IMR-90 (cell line): ENCODE measurements at regions of chr14 and their contacts with region 1.

Region 1: DNA sequence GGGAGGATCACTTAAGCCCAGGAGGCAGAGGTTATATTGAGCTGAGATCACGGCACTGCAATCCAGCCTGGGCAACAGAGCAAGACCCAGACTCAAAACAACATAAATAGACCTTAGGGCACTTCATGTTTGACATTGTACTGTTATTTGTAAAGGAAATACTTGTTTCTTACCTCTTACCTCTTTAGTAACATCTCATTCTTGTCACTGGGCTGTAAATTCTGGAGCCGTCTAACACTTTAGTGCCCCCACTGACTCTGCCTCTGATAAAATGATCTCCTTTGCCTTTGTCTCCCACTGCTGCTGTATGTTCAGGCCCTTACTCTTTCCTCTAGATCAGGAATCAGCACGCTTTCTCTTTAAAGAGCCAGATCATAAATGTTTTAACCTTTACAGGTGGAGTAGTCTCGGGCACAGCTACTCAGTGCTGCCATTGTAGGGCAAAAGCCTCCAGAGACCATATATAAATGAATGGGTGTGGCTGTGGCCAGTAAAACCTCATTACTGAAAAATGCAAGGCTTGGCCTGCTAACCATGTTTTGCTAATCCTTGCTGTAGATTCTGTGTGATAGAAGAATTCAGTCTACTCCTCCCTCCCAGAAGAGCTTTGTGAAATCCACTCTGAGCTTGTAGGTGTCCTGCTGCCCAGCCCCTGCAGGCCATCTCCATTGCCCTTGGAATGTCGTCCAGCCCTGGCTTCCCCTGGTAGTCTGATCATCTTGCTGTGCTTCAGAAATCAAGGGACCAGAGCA is 58.2 kb downstream of the HSP90AA1 start:
- DNase-seq: peak; percentile 77
- ATAC-seq: peak; percentile 78
- H3K4me3 ChIP-seq: no peak overlapping the region
- H3K27ac ChIP-seq: peak overlapping the region; percentile 80
- H3K4me1 ChIP-seq: peaks cover 13% of the 10 kb centered on the region
- H3K27me3 ChIP-seq: no peaks in the 10 kb centered on the region
- CTCF ChIP-seq: no peak
- POLR2A ChIP-seq: no peak
- RAD21 ChIP-seq: no peak

Region 2: GRCh38 chr14:101520621-101521472 is 507.8 kb before region 1 on chr14:
- CTCF ChIA-PET with region 1: no interaction called
- POLR2A ChIA-PET with region 1: no interaction called
- dilution Hi-C with region 1: no loop called
- in situ Hi-C with region 1: no loop called
- intact Hi-C with region 1: no loop called
- DNase-seq: no peak
- ATAC-seq: no peak
- H3K4me3 ChIP-seq: no peak overlapping the region
- H3K27ac ChIP-seq: no peak overlapping the region
- H3K4me1 ChIP-seq: no peaks in the 10 kb centered on the region
- H3K27me3 ChIP-seq: no peaks in the 10 kb centered on the region; the same call in 1 of the 2 replicates
- CTCF ChIP-seq: no peak
- POLR2A ChIP-seq: no peak
- RAD21 ChIP-seq: no peak

Region 3: DNA sequence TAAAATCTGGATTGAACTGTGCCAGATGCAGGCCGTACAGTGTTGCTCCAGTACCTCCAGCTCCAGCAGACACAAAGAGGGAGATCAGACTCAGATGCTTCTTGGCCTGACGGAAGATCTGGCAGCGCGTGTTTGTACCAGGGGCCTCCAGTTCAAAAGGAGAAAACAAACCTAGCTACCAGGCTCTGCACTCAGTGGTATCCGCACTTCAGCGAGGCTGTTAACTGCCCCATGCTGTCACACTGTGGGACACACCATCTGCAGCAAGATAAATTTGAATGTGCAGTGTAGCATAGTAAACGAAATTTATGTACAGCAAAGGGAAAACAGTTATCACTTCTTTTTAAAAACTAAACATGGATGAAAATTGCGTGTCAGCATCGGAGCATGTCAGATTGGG is 59.1 kb before region 1 on chr14:
- CTCF ChIA-PET with region 1: no interaction called
- POLR2A ChIA-PET with region 1: no interaction called
- dilution Hi-C with region 1: no loop called
- in situ Hi-C with region 1: no loop called
- intact Hi-C with region 1: no loop called
- DNase-seq: no peak
- ATAC-seq: no peak
- H3K4me3 ChIP-seq: no peak overlapping the region
- H3K27ac ChIP-seq: no peak overlapping the region
- H3K4me1 ChIP-seq: peaks cover 2% of the 10 kb centered on the region
- H3K27me3 ChIP-seq: no peaks in the 10 kb centered on the region
- CTCF ChIP-seq: no peak
- POLR2A ChIP-seq: no peak
- RAD21 ChIP-seq: no peak

Region 4: GRCh38 chr14:101980251-101981099 is 48.1 kb before region 1 on chr14:
- CTCF ChIA-PET with region 1: no interaction called
- POLR2A ChIA-PET with region 1: no interaction called
- dilution Hi-C with region 1: no loop called
- in situ Hi-C with region 1: no loop called
- intact Hi-C with region 1: loop called (anchors 5 kb)
- DNase-seq: peak; percentile 99
- ATAC-seq: peak; percentile 91
- H3K4me3 ChIP-seq: no peak overlapping the region
- H3K27ac ChIP-seq: peak overlapping the region; percentile 82
- H3K4me1 ChIP-seq: peaks cover 8% of the 10 kb centered on the region
- H3K27me3 ChIP-seq: no peaks in the 10 kb centered on the region
- CTCF ChIP-seq: no peak
- POLR2A ChIP-seq: no peak
- RAD21 ChIP-seq: 0 out of 2 replicates have a peak, but pooled peaks have one; percentile 6

Region 5: DNA sequence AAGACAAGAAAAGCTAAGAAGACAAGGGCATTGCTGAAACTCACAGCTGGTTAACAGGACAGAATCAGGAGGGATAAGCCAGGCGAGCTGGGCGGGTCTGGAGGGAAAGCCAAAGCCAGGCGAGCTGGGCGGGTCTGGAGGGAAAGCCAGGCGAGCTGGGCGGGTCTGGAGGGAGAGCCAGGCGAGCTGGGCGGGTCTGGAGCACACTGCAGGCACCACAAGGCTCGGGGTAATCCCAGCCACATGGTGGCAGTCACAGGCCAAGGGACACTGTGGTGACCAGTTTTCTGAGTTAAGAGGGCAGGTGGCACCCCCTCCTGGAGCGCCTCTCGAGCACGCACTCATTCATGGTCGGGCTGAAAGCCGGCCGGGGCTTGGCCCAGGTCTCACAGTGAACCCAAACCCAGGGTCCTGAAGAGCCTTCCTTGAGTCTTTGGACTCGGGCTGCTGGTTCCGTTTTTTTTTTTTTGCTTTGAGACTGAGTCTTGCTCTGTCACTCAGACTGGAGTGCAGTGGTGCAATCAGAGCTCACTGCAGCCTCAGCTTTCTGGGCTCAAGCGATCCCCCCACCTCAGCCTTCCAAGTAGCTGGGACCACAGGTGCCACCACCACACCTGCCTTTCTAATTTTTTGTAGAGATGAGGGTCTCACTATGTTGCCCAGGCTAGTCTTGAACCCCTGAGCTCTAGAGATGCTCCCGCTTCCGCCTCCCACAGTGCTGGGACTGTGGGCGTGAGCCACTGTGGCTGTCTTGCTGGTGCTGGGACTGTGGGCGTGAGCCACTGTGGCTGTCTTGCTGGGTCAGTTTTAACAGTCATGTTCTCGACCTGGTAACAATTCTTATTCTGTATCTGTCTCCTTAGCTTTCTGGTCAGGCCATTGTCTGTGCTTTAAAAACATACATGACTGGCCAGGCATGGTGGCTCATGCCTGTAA is 18.0 kb after region 1 on chr14:
- CTCF ChIA-PET with region 1: interaction called, 10 read pairs
- POLR2A ChIA-PET with region 1: no interaction called
- dilution Hi-C with region 1: no loop called
- in situ Hi-C with region 1: no loop called
- intact Hi-C with region 1: no loop called
- DNase-seq: peak; percentile 28
- ATAC-seq: peak; percentile 9
- H3K4me3 ChIP-seq: no peak overlapping the region
- H3K27ac ChIP-seq: no peak overlapping the region
- H3K4me1 ChIP-seq: peaks cover 8% of the 10 kb centered on the region; the same call in 1 of the 2 replicates
- H3K27me3 ChIP-seq: no peaks in the 10 kb centered on the region
- CTCF ChIP-seq: peak; percentile 21; the same call in 1 of the 2 replicates
- POLR2A ChIP-seq: no peak
- RAD21 ChIP-seq: peak; percentile 35; the same call in 1 of the 2 replicates